HCT116 (cell line): ENCODE measurements at regions of chr9 and their contacts with region 1.

Region 1: DNA sequence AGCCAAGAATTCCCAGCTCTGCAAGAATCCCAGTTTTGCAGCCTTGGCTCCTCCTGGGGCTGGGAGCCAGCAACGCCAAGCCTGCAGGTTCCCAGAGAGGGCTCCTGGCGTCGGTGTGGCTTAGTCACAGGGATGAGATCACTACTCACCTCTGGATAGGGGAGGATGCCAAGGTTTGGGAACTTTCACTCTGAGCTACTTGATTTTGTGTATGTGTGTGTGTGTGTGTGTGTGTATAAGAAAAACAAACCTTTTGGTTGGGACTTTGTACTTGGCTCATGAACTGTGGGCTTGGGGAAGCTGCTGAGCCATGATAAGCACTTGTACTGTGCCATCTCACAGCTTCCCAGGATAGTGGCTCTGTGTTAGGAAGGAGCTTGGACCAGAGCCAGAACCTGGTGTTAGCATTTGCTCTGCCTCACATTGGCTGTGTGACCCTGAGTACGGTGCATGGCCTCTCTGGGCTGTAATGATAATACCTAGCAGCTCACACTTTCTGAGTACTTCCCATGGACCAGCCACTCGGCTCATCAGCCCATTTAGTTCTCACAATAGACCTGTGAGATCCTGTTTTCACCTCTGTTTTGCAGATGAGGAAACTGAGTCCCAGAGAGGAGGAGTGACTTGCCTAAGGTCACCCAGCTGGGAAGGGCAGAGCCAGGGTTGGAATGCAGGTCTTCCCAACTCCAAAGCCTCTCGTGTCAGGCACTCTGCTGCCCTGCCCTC is 41.4 kb upstream of the DAB2IP start:
- DNase-seq: peak; percentile 62
- ATAC-seq: peak; percentile 86
- H3K4me3 ChIP-seq: 0 out of 4 replicates have a peak overlapping the region, but pooled peaks of 1 of the 2 experiments have one; percentile 4
- H3K27ac ChIP-seq: peak overlapping the region; percentile 30
- H3K4me1 ChIP-seq: peaks cover 51% of the 10 kb centered on the region in 2 experiments
- H3K27me3 ChIP-seq: no peaks in the 10 kb centered on the region
- CTCF ChIP-seq: no peak
- POLR2A ChIP-seq: no peak
- RAD21 ChIP-seq: no peak

Region 2: DNA sequence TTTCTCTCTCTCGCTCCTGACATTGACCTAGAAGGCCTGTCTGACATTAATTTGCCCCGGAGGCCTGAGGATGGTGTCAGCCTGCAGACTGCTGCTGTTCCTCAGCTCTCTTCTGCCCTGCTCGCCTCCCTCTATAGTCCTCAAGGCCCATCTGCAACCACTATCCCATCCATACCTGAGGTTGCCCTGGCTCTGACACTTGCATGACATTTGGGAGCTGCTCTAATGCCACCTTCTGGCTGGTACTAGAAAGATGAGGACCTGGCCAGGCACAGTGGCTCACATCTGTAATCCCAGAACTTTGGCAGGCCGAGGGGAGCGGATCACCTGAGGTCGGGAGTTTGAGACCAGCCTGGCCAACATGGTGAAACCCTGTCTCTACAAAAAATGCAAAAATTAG is 71.8 kb before region 1 on chr9:
- CTCF ChIA-PET with region 1: no interaction called
- POLR2A ChIA-PET with region 1: no interaction called
- RAD21 ChIA-PET with region 1: no interaction called
- intact Hi-C with region 1: no loop called
- DNase-seq: peak; percentile 48
- ATAC-seq: peak; percentile 97
- H3K4me3 ChIP-seq: no peak overlapping the region
- H3K27ac ChIP-seq: no peak overlapping the region
- H3K4me1 ChIP-seq: no peaks in the 10 kb centered on the region; a peak in 1 of 4 replicates
- H3K27me3 ChIP-seq: no peaks in the 10 kb centered on the region
- CTCF ChIP-seq: peak; percentile 37 to 73 (median 47); a peak in 5 of 6 replicates
- POLR2A ChIP-seq: no peak
- RAD21 ChIP-seq: peak; percentile 84

Region 3: DNA sequence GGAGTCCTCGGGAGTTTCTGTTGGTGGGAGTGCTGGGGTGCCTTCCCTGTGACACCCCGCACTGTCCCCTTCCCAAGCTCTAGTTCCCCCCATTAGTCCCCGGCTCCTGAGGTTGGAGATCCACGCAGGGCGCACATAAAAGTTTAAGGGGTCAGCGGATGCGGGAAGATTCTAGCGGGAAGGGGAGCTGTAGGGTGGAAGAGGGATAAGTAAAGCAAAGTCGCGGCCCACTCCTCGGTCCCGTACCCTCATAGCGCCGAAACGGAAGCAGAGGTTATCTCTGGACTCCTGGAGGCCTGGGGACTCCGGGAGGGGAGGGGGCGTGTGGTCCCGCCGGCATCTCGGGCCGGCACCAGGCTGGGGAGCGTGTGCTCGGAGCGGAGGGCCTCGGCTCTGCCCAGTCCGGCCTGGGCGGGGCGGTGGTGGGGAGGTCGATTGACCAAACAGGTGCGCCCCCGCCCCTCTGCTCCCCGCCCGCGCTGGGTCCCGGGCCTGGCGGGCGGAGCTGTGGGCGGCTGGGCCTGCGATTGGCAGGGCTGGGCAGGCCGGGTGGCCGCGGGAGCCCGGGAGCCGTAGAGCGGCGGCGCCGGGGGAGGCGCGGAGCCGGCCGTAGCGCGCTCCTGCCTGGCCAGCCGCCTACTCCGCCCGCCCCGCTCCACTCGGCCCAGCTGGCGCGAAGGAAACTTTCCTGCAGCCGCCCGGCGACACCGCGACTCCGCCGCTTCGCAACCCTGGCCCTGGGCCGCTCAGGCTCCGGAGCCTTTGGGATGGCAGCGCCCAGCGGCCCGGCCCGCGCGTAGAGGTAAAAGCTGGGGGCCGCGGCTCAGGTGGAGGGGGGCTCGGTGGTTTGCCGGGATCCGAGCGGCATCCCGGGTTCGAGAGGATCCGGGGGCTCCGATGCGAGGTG is 10.8 kb before region 1 on chr9:
- CTCF ChIA-PET with region 1: interaction called, 18 read pairs
- POLR2A ChIA-PET with region 1: interaction called, 8 read pairs
- RAD21 ChIA-PET with region 1: no interaction called
- intact Hi-C with region 1: no loop called
- DNase-seq: peak; percentile 71
- ATAC-seq: peak; percentile 83
- H3K4me3 ChIP-seq: peak overlapping the region; percentile 79 to 88
- H3K27ac ChIP-seq: peak overlapping the region; percentile 95
- H3K4me1 ChIP-seq: peaks cover 22 to 53% of the 10 kb centered on the region in 2 experiments
- H3K27me3 ChIP-seq: no peaks in the 10 kb centered on the region
- CTCF ChIP-seq: no peak
- POLR2A ChIP-seq: no peak
- RAD21 ChIP-seq: no peak

Region 4: DNA sequence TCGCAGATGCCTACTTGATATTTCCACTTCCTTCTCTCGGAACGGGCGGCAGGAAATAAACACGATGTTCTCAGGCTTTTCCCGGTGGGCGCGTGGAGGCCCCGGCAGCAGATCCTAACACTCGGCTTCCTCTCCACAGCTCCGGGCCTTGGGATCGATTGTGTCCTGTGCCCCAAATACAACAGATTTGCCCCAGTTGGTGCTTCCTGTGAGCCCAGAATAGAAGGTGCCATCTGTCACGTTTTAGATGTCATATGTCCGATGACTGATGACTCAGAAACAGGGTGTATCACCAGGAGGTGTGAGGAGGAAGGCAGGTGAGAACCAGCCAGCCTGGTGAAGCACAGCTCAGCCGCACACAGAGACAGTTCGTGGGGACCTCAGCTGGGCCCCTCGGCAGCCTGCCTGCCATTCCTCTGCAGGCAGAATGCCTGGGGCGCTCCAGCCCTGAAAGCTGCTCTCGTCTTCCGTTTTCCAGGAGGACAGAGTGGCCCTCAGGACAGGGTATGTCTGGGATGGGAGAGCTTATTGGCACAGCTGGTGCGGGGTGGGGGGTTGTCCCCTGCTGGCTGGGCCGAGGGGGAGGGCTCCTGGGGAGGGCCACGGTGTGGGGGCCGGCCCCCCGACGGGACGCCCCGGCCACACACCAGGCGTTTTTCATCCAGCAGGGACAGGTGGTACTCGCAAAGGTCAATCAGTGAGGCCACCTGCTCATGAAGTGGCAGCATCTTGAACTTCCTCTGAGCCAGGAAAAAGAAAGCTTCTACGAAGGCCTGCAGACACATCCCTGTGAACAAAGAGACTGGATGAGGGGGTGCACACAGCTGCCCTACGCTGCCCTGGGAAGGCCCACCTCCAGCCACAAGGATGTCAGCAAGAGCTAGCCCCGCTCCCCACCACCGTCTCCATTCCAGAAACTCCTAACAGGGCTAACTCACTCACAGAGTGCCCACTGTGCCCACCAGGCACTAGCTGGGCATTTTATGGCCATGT is 212.4 kb after region 1 on chr9:
- CTCF ChIA-PET with region 1: no interaction called
- POLR2A ChIA-PET with region 1: no interaction called
- RAD21 ChIA-PET with region 1: no interaction called
- intact Hi-C with region 1: no loop called
- DNase-seq: no peak
- ATAC-seq: no peak
- H3K4me3 ChIP-seq: no peak overlapping the region
- H3K27ac ChIP-seq: no peak overlapping the region
- H3K4me1 ChIP-seq: peaks cover 0 to 15% of the 10 kb centered on the region in 2 experiments; a peak in 2 of 4 replicates
- H3K27me3 ChIP-seq: peaks cover 5% of the 10 kb centered on the region; the same call in 1 of the 2 replicates
- CTCF ChIP-seq: no peak
- POLR2A ChIP-seq: no peak
- RAD21 ChIP-seq: no peak